Mammary epithelial cell (primary cell): ENCODE measurements at regions of chr3 and their contacts with region 1.

Region 1: GRCh38 chr3:111803123-111803593 is 55.9 kb upstream of the PHLDB2 start:
- DNase-seq: peak; percentile 96
- H3K4me3 ChIP-seq: peak overlapping the region in 1 of 3 experiments; percentile 4
- H3K27ac ChIP-seq: peak overlapping the region; percentile 100
- H3K4me1 ChIP-seq: peaks cover 40% of the 10 kb centered on the region
- H3K27me3 ChIP-seq: no peaks in the 10 kb centered on the region
- CTCF ChIP-seq: no peak

Region 2: DNA sequence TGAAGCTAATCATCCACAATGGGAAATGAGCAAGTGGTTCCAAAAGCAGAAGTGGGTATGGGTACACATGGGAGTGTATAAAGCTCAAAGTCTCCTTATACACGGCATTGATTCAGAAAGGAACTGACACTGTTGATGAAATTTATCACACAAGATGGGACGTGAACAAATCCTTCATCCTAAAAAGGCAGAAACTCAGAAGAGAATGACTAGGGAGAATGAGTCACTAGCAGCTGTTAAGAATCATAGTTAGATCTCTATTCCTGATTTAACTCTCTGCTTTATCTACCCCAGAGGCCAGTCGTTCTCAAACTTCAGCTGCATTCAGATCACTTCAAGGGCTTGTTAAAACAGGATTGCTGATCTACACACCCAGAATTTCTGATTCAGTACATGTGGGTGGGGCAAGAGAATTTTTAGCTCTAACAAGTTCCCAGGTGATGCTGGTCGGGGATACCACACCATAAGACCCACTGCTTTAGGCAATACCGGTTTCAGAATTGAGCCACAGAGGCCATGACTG is 41.8 kb before region 1 on chr3:
- CTCF ChIA-PET with region 1: no interaction called
- dilution Hi-C with region 1: no loop called
- in situ Hi-C with region 1: loop called in 1 of 2 experiments (anchors 5 kb)
- intact Hi-C with region 1: loop called (anchors 2 kb)
- DNase-seq: peak; percentile 100
- H3K4me3 ChIP-seq: no peak overlapping the region
- H3K27ac ChIP-seq: peak overlapping the region; percentile 100
- H3K4me1 ChIP-seq: peaks cover 60% of the 10 kb centered on the region
- H3K27me3 ChIP-seq: no peaks in the 10 kb centered on the region
- CTCF ChIP-seq: no peak

Region 3: DNA sequence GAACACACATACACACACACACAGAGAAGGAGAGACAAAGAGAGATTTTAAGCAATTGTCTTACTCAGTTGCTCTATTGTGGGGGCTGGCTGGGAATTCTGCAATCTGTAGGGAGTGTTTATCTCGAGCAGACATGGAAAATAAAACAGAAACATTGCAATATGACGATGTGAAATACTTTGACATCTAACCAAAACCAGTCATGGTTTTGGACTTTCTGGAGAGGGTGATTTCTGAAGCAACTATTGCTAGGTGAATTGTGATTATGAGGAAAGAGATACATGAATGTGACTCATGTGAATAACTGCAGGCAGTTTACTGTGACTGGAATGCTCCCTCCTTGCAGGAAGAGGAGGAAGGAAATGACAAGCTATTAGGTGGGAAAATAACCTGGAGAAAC is 43.6 kb after region 1 on chr3:
- CTCF ChIA-PET with region 1: interaction called, 4 read pairs
- dilution Hi-C with region 1: no loop called
- in situ Hi-C with region 1: no loop called
- intact Hi-C with region 1: loop called (anchors 2 kb)
- DNase-seq: peak; percentile 93
- H3K4me3 ChIP-seq: no peak overlapping the region
- H3K27ac ChIP-seq: peak overlapping the region; percentile 84
- H3K4me1 ChIP-seq: peaks cover 44% of the 10 kb centered on the region
- H3K27me3 ChIP-seq: no peaks in the 10 kb centered on the region
- CTCF ChIP-seq: no peak